T-cell (primary cell): ENCODE measurements at regions of chr1 and their contacts with region 1.

Region 1: GRCh38 chr1:152189657-152190442 is 30.8 kb upstream of the RPTN start:
- DNase-seq: peak; percentile 22 to 81 (median 58)
- ATAC-seq: peak; percentile 65 to 71 (median 68)
- H3K4me3 ChIP-seq: peak overlapping the region; percentile 67 to 69
- H3K4me3 Mint-ChIP-seq: peak overlapping the region; percentile 72 to 85 (median 79)
- H3K27ac ChIP-seq: no peak overlapping the region
- H3K27ac Mint-ChIP-seq: no peak overlapping the region
- H3K4me1 ChIP-seq: peaks cover 0 to 13% of the 10 kb centered on the region in 2 experiments
- H3K4me1 Mint-ChIP-seq: peaks cover 0 to 9% (median 6%) of the 10 kb centered on the region in 3 donors
- H3K27me3 ChIP-seq: peaks cover 3 to 8% of the 10 kb centered on the region in 2 experiments
- H3K27me3 Mint-ChIP-seq: no peaks in the 10 kb centered on the region

Region 2: DNA sequence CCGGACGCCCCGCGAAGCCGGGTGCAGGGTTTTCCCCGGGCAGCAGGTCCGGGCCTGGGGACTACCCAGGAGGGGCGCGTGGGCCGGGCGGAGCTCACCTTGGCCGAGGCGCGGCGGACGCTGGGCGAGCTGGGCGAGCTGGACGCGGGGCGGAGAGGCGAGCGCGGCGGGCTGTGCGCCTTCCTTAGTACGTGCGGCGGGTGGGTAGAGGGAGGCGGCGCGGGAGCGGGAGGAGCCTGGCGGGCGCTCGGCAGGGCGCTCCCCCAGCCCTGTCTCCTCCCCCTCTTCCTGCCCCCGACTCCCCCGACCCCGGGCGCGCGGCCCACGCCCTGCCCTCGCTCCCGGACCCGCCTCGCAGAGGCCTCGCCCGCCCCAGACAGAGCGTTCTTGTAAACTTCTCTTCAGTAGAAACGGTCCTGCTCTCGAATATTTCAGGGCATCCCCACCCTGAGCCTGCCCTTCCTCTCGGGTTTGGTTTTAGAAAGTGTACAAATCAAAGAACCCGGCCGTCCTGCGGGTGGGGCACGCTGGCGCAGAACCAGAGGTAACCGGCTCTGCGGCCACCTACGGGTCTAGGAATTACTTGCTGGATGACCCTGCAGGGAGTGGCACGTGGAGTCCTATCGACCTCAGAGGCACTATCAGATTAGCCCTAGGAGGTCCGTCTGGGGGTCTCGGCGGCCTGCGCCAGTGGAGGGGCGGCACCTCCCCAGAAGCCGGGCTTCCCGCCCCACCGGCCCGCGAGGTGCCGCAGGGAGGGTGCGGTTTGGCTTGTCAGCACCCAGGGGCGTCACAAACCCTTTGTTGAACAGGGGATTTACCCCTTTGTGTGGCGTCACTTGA is 196.0 kb before region 1 on chr1 and contains the start of gene S100A10:
- CTCF ChIA-PET with region 1: no interaction called
- POLR2A ChIA-PET with region 1: no interaction called
- DNase-seq: peak; percentile 66 to 88 (median 76)
- ATAC-seq: peak; percentile 89 to 94 (median 91)
- H3K4me3 ChIP-seq: peak within 1 kb of the TSS; percentile 65 to 92
- H3K4me3 Mint-ChIP-seq: peak within 1 kb of the TSS; percentile 93 to 97 (median 96)
- H3K27ac ChIP-seq: peak within 1 kb of the TSS; percentile 89
- H3K27ac Mint-ChIP-seq: peak within 1 kb of the TSS; percentile 96 to 97
- H3K4me1 ChIP-seq: peaks cover 12 to 39% of the 10 kb centered on the region in 2 experiments
- H3K4me1 Mint-ChIP-seq: peaks cover 46 to 54% (median 48%) of the 10 kb centered on the region in 3 donors
- H3K27me3 ChIP-seq: peaks cover 0 to 2% of the 10 kb centered on the region in 2 experiments
- H3K27me3 Mint-ChIP-seq: no peaks in the 10 kb centered on the region
- total RNA-seq, gene S100A10: 157 to 277 (median 264) TPM

Region 3: DNA sequence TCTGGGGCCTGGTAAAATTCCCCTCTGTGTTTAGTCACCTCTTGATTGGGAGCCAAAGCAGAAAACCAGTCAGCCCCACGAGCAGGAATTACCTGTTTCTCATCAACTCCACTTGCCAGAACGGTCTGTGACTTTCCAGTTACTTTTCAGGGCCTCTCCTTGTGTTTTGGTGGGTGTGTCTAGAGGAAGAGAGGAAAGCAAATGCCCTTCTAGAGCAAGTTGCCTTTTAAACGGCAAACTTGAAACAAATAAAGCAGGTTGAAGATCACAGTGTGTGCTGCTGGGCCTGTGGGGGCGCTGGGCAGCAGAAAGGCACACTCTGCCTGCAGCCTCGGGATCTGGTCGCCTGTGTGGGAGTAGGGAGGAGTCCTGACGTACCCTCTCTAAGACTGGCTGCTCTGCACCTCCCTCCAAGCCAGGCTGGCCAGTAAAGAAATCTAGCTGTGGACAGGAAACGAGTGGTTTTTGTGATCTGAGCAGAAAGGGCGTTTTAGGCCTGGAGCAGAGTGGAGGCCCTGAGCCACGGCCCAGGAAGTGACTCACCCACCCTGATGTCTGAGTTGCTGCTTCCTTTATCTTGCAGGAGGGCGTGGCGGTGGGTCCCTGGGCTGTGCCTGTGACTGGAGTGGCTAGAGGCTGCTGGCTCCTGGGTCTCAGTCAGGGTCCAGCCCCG is 142.0 kb before region 1 on chr1:
- CTCF ChIA-PET with region 1: interaction called, 8 to 11 read pairs
- POLR2A ChIA-PET with region 1: no interaction called
- DNase-seq: peak; percentile 66 to 90 (median 76)
- ATAC-seq: peak; percentile 92 to 96 (median 94)
- H3K4me3 ChIP-seq: peak overlapping the region; percentile 15 to 27
- H3K4me3 Mint-ChIP-seq: peak overlapping the region; percentile 67 to 77 (median 75)
- H3K27ac ChIP-seq: peak overlapping the region; percentile 98
- H3K27ac Mint-ChIP-seq: peak overlapping the region; percentile 99 to 100
- H3K4me1 ChIP-seq: peaks cover 14 to 26% of the 10 kb centered on the region in 2 experiments
- H3K4me1 Mint-ChIP-seq: peaks cover 29 to 40% (median 38%) of the 10 kb centered on the region in 3 donors
- H3K27me3 ChIP-seq: peaks cover 0 to 3% of the 10 kb centered on the region in 2 experiments
- H3K27me3 Mint-ChIP-seq: peaks cover 0 to 2% of the 10 kb centered on the region in 2 donors

Region 4: GRCh38 chr1:152440635-152441471 is 251.0 kb after region 1 on chr1:
- CTCF ChIA-PET with region 1: interaction called in 1 of 2 experiments, 14 read pairs
- POLR2A ChIA-PET with region 1: no interaction called
- DNase-seq: peak; percentile 26 to 83 (median 58)
- ATAC-seq: peak; percentile 90 to 96 (median 96)
- H3K4me3 ChIP-seq: no peak overlapping the region
- H3K4me3 Mint-ChIP-seq: no peak overlapping the region
- H3K27ac ChIP-seq: no peak overlapping the region
- H3K27ac Mint-ChIP-seq: peak overlapping the region in 1 of 2 donors; percentile 35
- H3K4me1 ChIP-seq: peaks cover 0 to 5% of the 10 kb centered on the region in 2 experiments
- H3K4me1 Mint-ChIP-seq: peaks cover 0 to 7% (median 7%) of the 10 kb centered on the region in 3 donors
- H3K27me3 ChIP-seq: peaks cover 0 to 6% of the 10 kb centered on the region in 2 experiments
- H3K27me3 Mint-ChIP-seq: peaks cover 34 to 36% of the 10 kb centered on the region in 2 donors